Heart left ventricle (tissue), 16 donors: ENCODE measurements at regions of chr7 and their contacts with region 1.

Region 1: DNA sequence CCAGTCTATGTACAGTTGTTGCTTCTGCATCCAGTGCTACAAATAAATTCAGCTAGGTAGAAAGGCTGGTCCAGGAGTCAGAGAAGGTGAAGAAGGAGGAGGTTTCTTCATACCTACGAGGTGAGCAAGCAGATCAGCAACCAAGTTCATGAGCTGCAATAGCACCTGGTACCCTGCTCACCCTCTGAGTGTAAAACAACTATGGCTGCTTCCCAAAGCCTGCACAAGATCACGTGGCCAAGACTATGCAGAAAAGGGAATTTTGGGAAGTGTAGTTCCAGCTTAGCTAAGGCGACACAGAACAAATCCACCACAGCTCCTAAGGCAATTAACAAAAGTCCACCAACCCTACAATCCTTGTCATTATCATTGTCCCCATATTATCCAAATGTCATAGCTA is 95.9 kb upstream of the AUTS2 start:
- DNase-seq: no peak
- ATAC-seq: no peak
- H3K4me3 ChIP-seq: no peak overlapping the region
- H3K27ac ChIP-seq: no peak overlapping the region
- H3K4me1 ChIP-seq: no peaks in the 10 kb centered on the region
- H3K27me3 ChIP-seq: no peaks in the 10 kb centered on the region
- CTCF ChIP-seq: no peak
- POLR2A ChIP-seq: no peak

Region 2: DNA sequence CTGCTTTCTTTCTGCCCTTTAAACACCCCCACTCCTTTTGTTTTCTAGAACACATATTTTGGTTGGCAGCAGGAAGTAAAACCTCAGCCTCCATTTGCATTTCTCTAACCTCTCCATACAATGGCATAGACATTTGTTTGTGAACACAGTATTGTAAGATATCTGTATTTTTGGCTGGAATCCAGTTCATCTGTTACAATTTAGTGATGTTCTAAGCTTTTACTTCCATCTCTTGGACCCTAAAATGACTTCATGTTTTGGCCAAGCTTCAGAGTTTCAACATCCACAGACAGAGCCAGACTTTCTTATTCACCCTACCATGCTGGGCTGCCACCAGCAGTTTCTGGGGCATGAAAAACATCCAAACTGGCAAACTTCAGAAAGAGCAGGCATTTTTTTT is 74.9 kb after region 1 on chr7:
- intact Hi-C with region 1: loop called in 1 of 10 experiments (anchors 5 kb)
- DNase-seq: no peak
- ATAC-seq: no peak
- H3K4me3 ChIP-seq: no peak overlapping the region
- H3K27ac ChIP-seq: no peak overlapping the region
- H3K4me1 ChIP-seq: no peaks in the 10 kb centered on the region
- H3K27me3 ChIP-seq: no peaks in the 10 kb centered on the region
- CTCF ChIP-seq: no peak
- POLR2A ChIP-seq: no peak